ENCODE measurements at regions of chr7 and their contacts with region 1.

Region 1: GRCh38 chr7:17444673-17445072 is 146.2 kb downstream of the AHR start:
- DNase-seq: peak; percentile 53
- H3K4me3 Mint-ChIP-seq: peak overlapping the region; percentile 20
- H3K27ac Mint-ChIP-seq: peak overlapping the region; percentile 74
- H3K4me1 Mint-ChIP-seq: peaks cover 71% of the 10 kb centered on the region
- H3K27me3 Mint-ChIP-seq: no peaks in the 10 kb centered on the region
- CTCF ChIP-seq: no peak

Region 2: GRCh38 chr7:17402628-17403278 is 41.9 kb before region 1 on chr7:
- CTCF ChIA-PET with region 1: no interaction called
- intact Hi-C with region 1: no loop called
- DNase-seq: no peak
- H3K4me3 Mint-ChIP-seq: peak overlapping the region; percentile 15
- H3K27ac Mint-ChIP-seq: peak overlapping the region; percentile 21
- H3K4me1 Mint-ChIP-seq: peaks cover 67% of the 10 kb centered on the region
- H3K27me3 Mint-ChIP-seq: no peaks in the 10 kb centered on the region
- CTCF ChIP-seq: no peak

Region 3: DNA sequence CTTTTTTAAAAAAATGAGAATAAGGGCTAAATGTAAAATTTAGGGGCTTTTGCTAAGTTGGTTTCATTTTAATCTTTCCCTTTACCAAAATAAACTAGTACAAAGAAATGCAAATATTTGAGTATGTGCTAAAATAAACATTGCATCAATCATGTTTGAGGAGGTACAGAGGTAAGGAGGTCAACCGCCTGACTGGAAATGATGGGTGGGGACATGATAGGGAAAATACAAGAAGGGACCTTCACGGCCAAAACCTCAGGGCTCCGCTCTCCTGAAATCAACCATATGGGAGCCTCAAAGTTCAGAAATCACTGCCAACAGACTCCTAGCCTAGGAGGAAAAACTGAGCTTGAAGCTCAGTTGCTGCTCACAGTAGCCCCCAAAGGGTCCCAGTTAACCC is 61.4 kb after region 1 on chr7:
- CTCF ChIA-PET with region 1: no interaction called
- intact Hi-C with region 1: loop called (anchors 5 kb)
- DNase-seq: peak; percentile 43
- H3K4me3 Mint-ChIP-seq: peak overlapping the region; percentile 38
- H3K27ac Mint-ChIP-seq: peak overlapping the region; percentile 6
- H3K4me1 Mint-ChIP-seq: peaks cover 41% of the 10 kb centered on the region
- H3K27me3 Mint-ChIP-seq: no peaks in the 10 kb centered on the region
- CTCF ChIP-seq: no peak